Mammary epithelial cell (primary cell): ENCODE measurements at regions of chr14 and their contacts with region 1.

Region 1: DNA sequence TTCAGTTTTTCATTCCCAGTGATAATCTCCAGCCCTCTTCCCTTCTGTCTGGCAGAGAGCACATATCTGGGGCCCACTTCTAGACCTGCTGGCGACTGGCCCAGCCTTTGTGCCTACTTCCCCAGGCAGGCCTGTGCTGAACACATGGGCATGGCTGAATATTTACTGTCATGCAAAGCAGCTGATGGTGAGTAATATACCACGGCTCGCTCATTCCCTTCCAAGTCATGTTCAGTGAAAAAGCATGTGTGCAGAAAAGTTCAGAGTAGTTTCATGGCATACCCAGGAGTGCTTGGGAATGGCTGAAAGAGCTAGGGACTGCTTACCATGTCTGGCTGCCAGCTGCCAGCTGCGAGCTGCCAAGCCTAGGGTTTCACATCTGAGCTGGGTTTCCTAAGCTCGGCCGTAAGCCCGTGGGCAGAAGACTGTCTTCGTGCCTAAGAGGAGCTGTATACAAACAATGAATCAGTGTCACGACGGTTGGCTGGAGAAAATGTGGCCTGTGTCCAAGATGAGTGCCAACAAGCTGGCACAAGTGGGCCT is 179.9 kb upstream of the PELI2 start:
- DNase-seq: peak; percentile 75
- H3K4me3 ChIP-seq: no peak overlapping the region
- H3K27ac ChIP-seq: no peak overlapping the region
- H3K4me1 ChIP-seq: peaks cover 11% of the 10 kb centered on the region
- H3K27me3 ChIP-seq: no peaks in the 10 kb centered on the region
- CTCF ChIP-seq: no peak

Region 2: GRCh38 chr14:55846826-55847446 is 91.4 kb before region 1 on chr14:
- CTCF ChIA-PET with region 1: no interaction called
- dilution Hi-C with region 1: no loop called
- in situ Hi-C with region 1: no loop called
- intact Hi-C with region 1: loop called (anchors 10 kb)
- DNase-seq: no peak
- H3K4me3 ChIP-seq: no peak overlapping the region
- H3K27ac ChIP-seq: no peak overlapping the region
- H3K4me1 ChIP-seq: peaks cover 5% of the 10 kb centered on the region
- H3K27me3 ChIP-seq: no peaks in the 10 kb centered on the region
- CTCF ChIP-seq: no peak